Prostate gland (tissue), 2 donors: ENCODE measurements at regions of chr4 and their contacts with region 1.

Region 1: GRCh38 chr4:78644744-78645330 is 93.3 kb downstream of the ANXA3 start:
- DNase-seq: peak; percentile 26
- H3K4me3 ChIP-seq: no peak overlapping the region
- H3K27ac ChIP-seq: peak overlapping the region; percentile 62 to 76
- H3K4me1 ChIP-seq: no peaks in the 10 kb centered on the region
- H3K27me3 ChIP-seq: no peaks in the 10 kb centered on the region
- CTCF ChIP-seq: peak; percentile 71 to 88 (median 78)
- POLR2A ChIP-seq: no peak

Region 2: GRCh38 chr4:78775303-78776030 is 130.6 kb after region 1 on chr4:
- intact Hi-C with region 1: loop called (anchors 5 kb)
- DNase-seq: peak; percentile 86
- H3K4me3 ChIP-seq: peak overlapping the region; percentile 56 to 76
- H3K27ac ChIP-seq: peak overlapping the region; percentile 92 to 94
- H3K4me1 ChIP-seq: no peaks in the 10 kb centered on the region
- H3K27me3 ChIP-seq: no peaks in the 10 kb centered on the region
- CTCF ChIP-seq: peak in 2 of 4 experiments; percentile 0 to 4
- POLR2A ChIP-seq: no peak